ENCODE measurements at regions of chr3 and their contacts with region 1.

Region 1: DNA sequence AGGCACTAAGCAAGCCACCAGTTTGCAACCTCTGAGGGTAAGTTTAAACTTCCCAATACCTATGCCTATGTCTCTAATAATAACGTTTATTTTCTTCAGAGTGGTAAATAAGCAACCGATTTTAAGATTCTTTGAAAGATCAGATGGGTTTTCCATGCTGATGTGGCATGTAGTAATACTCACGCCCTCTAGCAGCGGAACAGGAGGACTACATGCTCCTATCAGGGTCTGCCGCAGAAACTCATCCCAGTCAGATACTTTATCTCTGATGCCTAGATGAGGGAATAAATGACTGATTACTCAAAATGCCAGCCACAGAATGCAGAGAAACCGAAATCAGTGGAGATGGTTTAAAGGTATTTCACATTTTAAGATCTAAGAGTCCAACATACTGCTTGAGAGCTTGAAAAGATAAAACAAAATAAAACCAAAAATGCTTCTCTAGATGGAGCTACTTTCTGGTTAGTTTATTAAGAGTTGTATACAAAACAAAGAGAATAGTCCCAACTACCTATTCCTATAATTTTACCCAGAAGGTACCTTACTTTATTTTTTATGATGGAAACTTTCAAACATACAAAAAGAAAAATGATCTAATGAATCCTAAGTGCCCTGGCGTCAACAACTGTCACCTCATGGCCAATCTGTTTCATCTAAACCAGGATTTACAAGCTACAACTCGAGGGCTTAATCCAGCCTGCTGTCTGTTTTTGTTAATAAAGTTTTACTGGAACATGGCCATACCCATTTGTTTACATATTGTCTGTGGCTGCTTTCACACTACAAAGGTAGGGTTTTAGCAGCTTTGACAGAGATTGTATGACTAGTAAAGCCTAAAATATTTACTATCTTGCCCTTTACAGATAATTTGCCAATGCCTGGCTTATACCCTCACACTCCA is 37.5 kb upstream of the STIMATE start:
- DNase-seq: peak in 1 of 2 donors; percentile 52
- ATAC-seq: peak; percentile 78
- H3K4me3 ChIP-seq: no peak overlapping the region
- H3K27ac ChIP-seq: no peak overlapping the region
- H3K4me1 ChIP-seq: no peaks in the 10 kb centered on the region
- H3K27me3 ChIP-seq: no peaks in the 10 kb centered on the region

Region 2: GRCh38 chr3:52742418-52743041 is 192.3 kb before region 1 on chr3:
- intact Hi-C with region 1: loop called (anchors 5 to 10 kb)
- DNase-seq: no peak
- ATAC-seq: no peak
- H3K4me3 ChIP-seq: no peak overlapping the region
- H3K27ac ChIP-seq: no peak overlapping the region
- H3K4me1 ChIP-seq: no peaks in the 10 kb centered on the region
- H3K27me3 ChIP-seq: no peaks in the 10 kb centered on the region

Region 3: GRCh38 chr3:52770496-52771333 is 164.2 kb before region 1 on chr3 and contains the start of gene NEK4:
- intact Hi-C with region 1: loop called in 1 of 2 experiments (anchors 10 kb)
- DNase-seq: peak; percentile 96 to 97
- ATAC-seq: peak; percentile 98
- H3K4me3 ChIP-seq: peak within 1 kb of the TSS; percentile 84 to 89
- H3K27ac ChIP-seq: peak within 1 kb of the TSS in 1 of 2 donors; percentile 64
- H3K4me1 ChIP-seq: peaks cover 0 to 3% of the 10 kb centered on the region in 2 donors
- H3K27me3 ChIP-seq: no peaks in the 10 kb centered on the region
- total RNA-seq, gene NEK4: 21.7 to 22.1 TPM

Region 4: DNA sequence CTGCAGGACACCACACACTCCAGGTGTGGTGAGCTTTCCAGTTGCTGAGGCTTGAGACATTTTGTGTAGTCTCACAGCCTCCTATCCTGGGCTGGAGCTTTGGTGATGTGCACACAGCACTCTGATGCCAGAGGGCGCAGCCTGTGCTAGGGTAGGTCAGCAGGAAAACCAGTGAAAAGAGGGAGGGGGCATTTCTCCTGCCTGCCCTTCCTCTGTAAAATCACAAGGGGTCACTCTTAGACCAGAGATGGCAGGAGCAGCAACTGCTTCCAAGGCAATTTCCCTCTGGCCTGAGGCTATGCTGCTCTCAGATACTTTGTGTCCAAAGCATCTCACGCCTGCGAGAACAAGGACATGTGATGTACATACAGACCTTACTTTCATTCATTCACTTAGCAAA is 83.5 kb before region 1 on chr3:
- intact Hi-C with region 1: loop called (anchors 5 to 10 kb)
- DNase-seq: no peak
- ATAC-seq: no peak
- H3K4me3 ChIP-seq: no peak overlapping the region
- H3K27ac ChIP-seq: no peak overlapping the region
- H3K4me1 ChIP-seq: no peaks in the 10 kb centered on the region
- H3K27me3 ChIP-seq: no peaks in the 10 kb centered on the region

Region 5: GRCh38 chr3:53072653-53073552 is 138.0 kb after region 1 on chr3:
- intact Hi-C with region 1: loop called in 1 of 2 experiments (anchors 10 kb)
- DNase-seq: peak; percentile 91 to 96
- ATAC-seq: peak; percentile 92
- H3K4me3 ChIP-seq: peak overlapping the region; percentile 24 to 57
- H3K27ac ChIP-seq: peak overlapping the region in 1 of 2 donors; percentile 11
- H3K4me1 ChIP-seq: no peaks in the 10 kb centered on the region
- H3K27me3 ChIP-seq: no peaks in the 10 kb centered on the region

Measured in aorta (tissue), 5 donors.